Heart right ventricle (tissue), 16 donors: ENCODE measurements at regions of chr4 and their contacts with region 1.

Region 1: DNA sequence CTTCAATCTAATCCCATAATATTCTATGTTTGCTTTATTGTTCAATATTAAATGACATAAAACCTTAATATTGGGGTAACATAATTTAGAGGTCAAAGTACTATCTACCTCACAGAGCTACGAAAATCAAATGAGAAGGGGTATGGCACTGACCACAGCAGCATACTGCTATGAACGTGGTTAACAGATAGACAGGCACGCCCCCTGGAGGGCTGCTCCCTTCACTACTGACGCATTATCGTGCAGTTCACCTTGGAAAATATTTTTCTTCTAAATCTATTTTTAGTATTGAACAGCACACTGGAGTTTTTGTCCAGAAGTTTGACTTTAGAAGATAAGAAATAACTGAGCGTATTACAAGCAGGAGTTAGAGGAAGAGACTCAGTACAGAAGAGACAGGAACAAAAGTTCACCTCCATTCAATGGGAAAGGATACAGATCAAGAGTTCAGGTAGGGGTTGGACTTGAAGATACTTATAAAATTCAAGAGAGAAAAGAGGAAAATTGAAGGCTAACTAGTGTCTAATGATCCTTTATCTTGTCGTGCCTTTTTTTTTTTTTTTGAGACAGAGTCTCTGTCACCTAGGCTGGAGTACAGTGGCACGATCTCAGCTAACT is 22.7 kb downstream of the MAP9 start:
- DNase-seq: peak; percentile 41 to 64
- ATAC-seq: peak in 6 of 8 donors; percentile 25 to 88 (median 81)
- H3K4me3 ChIP-seq: no peak overlapping the region
- H3K27ac ChIP-seq: no peak overlapping the region
- H3K4me1 ChIP-seq: peaks cover 0 to 5% (median 0%) of the 10 kb centered on the region in 9 donors
- H3K27me3 ChIP-seq: no peaks in the 10 kb centered on the region
- CTCF ChIP-seq: peak; percentile 40 to 82 (median 73)

Region 2: DNA sequence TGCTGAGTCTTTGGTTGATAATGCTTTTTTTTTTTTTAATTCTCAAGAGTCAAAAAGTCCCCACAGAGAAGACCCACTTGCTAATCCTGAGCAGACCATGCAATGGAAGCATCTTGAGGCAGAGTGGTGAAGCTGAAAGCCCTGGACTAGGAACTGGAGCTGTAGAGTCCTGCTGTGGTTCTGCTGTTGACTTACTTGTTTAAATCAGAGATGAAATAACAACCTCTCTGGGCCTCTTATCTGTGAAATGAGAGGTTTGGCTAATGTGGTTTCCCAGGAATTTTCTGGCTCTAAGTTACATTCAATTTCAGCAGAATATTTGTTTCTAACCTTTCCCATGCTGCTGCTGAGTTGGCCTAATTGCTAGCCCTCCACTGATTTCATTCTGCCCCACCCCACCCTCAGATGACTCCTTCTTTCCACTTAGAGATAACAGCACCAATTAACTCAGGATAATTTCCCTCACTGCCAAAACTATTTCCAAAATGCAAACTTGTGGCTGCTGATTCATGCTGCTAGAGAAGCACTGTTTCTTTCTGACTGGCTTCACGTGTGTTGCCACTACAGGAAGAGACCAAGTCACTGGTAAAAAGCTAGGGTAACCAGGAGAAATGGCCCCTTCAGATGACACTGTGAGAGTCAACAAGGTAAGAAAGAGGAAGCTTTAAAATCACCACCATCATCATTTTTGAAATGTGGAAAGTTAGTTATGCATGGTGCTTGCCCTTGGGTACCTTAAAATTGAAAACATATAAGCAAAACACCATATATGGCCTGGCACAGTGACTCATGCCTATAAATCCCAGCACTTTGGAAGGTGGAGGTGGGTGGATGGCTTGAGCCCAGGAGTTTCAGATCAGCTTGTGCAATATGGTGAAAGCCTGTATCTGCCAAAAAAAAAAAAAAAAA is 1188.8 kb before region 1 on chr4:
- intact Hi-C with region 1: no loop called
- DNase-seq: no peak
- ATAC-seq: peak in 3 of 8 donors; percentile 41 to 81 (median 71)
- H3K4me3 ChIP-seq: no peak overlapping the region
- H3K27ac ChIP-seq: no peak overlapping the region
- H3K4me1 ChIP-seq: no peaks in the 10 kb centered on the region
- H3K27me3 ChIP-seq: peaks cover 0 to 4% (median 0%) of the 10 kb centered on the region in 7 donors
- CTCF ChIP-seq: no peak

Region 3: GRCh38 chr4:154807042-154807630 is 546.9 kb before region 1 on chr4:
- intact Hi-C with region 1: loop called in 3 of 10 experiments (anchors 2 to 10 kb)
- DNase-seq: no peak
- ATAC-seq: no peak
- H3K4me3 ChIP-seq: no peak overlapping the region
- H3K27ac ChIP-seq: no peak overlapping the region
- H3K4me1 ChIP-seq: no peaks in the 10 kb centered on the region
- H3K27me3 ChIP-seq: no peaks in the 10 kb centered on the region
- CTCF ChIP-seq: peak; percentile 11 to 70 (median 59)

Region 4: GRCh38 chr4:154854362-154854761 is 499.7 kb before region 1 on chr4:
- intact Hi-C with region 1: loop called in 1 of 10 experiments (anchors 5 kb)
- DNase-seq: no peak
- ATAC-seq: no peak
- H3K4me3 ChIP-seq: no peak overlapping the region
- H3K27ac ChIP-seq: no peak overlapping the region
- H3K4me1 ChIP-seq: no peaks in the 10 kb centered on the region
- H3K27me3 ChIP-seq: peaks cover 0 to 5% (median 0%) of the 10 kb centered on the region in 7 donors
- CTCF ChIP-seq: peak in 5 of 9 donors; percentile 12 to 27 (median 16)

Region 5: GRCh38 chr4:154982187-154983047 is 371.6 kb before region 1 on chr4:
- intact Hi-C with region 1: loop called in 5 of 10 experiments (anchors 5 kb)
- DNase-seq: peak; percentile 22 to 30
- ATAC-seq: peak in 2 of 8 donors; percentile 27 to 33
- H3K4me3 ChIP-seq: no peak overlapping the region
- H3K27ac ChIP-seq: no peak overlapping the region
- H3K4me1 ChIP-seq: no peaks in the 10 kb centered on the region
- H3K27me3 ChIP-seq: no peaks in the 10 kb centered on the region
- CTCF ChIP-seq: peak in 8 of 9 donors; percentile 21 to 64 (median 61)

Region 6: DNA sequence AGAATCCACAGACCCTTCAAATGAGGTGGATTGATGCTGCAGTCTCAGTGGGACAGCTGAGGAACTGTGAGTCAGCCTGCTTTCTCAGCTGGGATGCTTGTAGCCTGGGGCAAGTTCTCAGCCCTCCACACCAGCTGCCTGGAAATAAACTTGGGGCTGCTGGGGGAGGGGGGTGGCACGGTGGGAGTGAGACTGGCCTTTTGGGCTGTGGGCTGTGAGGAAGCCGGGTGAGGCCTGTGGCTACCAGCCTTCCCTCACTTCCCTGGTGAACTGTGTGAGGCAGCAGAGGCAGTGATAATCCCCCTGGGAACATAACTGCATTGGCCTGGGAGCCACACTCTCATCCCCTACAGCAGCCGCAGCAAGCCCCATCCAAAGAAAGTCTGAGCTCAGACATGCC is 198.1 kb after region 1 on chr4:
- intact Hi-C with region 1: no loop called
- DNase-seq: no peak
- ATAC-seq: no peak
- H3K4me3 ChIP-seq: no peak overlapping the region
- H3K27ac ChIP-seq: no peak overlapping the region
- H3K4me1 ChIP-seq: peaks cover 0 to 3% (median 0%) of the 10 kb centered on the region in 9 donors
- H3K27me3 ChIP-seq: no peaks in the 10 kb centered on the region
- CTCF ChIP-seq: no peak

Region 7: DNA sequence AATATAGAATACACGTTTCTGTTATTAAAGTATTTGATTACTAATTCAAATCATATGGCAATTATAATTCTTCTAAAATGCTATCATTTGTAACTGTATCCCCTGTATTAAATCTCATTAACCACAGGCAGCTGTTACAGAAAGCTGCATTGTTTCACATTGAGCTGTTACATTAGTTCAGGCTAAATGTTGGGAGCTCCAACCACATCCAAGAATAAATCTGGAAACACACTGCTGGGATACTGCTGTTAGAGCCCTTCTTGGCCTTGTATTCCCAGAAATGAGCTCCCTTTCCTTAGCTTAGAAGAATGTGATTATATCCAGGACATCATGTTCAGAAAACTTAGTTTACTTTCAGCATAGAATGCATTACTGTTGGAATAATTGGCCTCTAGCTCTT is 453.0 kb after region 1 on chr4:
- intact Hi-C with region 1: no loop called
- DNase-seq: no peak
- ATAC-seq: no peak
- H3K4me3 ChIP-seq: no peak overlapping the region
- H3K27ac ChIP-seq: no peak overlapping the region
- H3K4me1 ChIP-seq: no peaks in the 10 kb centered on the region
- H3K27me3 ChIP-seq: no peaks in the 10 kb centered on the region
- CTCF ChIP-seq: no peak